RWPE1 (cell line): ENCODE measurements at regions of chr10 and their contacts with region 1.

Region 1: DNA sequence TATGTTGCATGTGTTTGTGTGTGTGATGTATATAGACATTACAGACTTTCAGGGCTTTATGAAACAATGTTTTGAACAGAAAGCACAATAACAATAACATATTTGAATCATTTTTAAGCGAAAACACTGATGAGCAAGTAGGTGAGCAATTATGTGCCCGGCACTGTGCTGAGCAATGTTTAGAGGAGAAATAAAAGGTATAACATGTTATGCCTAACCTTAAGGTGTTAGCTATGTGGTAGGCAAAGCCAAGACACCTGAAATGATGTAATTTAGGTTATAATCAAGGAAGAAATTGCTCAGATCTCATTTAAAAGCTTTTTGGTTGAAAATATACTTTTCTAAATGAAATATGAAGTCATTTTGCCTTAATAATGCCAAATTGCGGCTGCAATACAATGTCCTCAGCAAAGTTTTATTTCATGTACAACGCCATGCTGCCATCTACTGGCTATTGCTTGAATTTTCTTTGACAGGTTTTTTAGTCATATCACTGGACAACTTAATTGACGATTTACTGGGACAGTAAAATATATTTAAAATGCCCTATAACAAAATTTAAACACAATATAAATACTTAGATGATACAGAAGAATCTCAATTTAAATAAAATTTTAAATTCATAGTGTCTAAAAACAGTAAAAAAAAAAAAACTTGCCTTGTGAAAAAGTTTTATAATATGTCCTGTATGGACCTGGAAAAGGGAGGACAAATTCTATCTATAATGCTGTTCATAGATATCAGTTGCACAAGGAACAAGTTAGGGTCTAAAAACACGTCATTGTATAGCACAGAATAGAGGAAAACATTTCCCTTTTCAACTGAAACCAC is 131.1 kb upstream of the CDK1 start:
- DNase-seq: peak; percentile 44
- H3K27ac ChIP-seq: no peak overlapping the region
- CTCF ChIP-seq: peak; percentile 69

Region 2: GRCh38 chr10:60444494-60445064 is 202.6 kb before region 1 on chr10:
- CTCF ChIA-PET with region 1: interaction called, 17 read pairs
- POLR2A ChIA-PET with region 1: no interaction called
- DNase-seq: no peak
- H3K27ac ChIP-seq: no peak overlapping the region
- CTCF ChIP-seq: peak; percentile 69

Region 3: GRCh38 chr10:60669491-60669890 is 22.3 kb after region 1 on chr10:
- CTCF ChIA-PET with region 1: no interaction called
- POLR2A ChIA-PET with region 1: no interaction called
- DNase-seq: no peak
- H3K27ac ChIP-seq: no peak overlapping the region
- CTCF ChIP-seq: no peak